ENCODE measurements at regions of chr16 and their contacts with region 1.

Region 1: DNA sequence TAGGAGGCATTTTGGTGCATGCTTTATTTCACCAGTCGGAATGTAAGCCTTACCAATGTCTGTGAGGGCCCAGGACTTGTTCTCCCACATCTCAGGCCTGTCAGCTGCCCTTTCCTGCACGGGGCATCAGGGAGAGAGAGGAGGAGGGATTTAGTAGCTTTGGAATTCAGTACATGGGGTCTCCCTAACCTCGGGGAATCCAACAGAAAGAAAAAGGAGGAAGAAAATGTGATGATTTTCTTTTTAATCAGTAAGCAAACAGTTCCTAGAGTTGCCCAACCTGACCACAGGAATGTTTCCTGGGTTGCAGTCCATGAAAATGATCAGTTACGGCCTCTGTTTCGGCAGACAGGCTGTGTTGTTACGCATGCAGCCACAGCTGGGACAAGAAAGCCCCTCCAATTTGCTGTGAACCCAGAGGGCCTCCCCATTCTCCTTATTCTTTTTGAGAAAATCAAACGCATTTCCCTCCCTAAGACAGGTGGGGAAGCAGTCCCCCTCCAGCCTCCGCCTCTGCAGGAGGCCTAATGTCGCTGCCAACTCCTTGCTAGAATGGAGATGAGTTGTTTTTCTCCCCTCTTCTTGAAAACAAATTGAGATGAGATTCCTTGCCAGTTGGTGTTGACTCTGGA is 53.1 kb upstream of the TANGO6 start:
- DNase-seq: peak; percentile 32 to 68 (median 59)
- ATAC-seq: peak; percentile 57
- H3K4me3 ChIP-seq: no peak overlapping the region
- H3K27ac ChIP-seq: peak overlapping the region; percentile 77 to 92 (median 80)
- H3K4me1 ChIP-seq: peaks cover 88% of the 10 kb centered on the region
- H3K27me3 ChIP-seq: no peaks in the 10 kb centered on the region
- CTCF ChIP-seq: no peak
- POLR2A ChIP-seq: peak in 2 of 3 donors; percentile 9 to 13

Region 2: DNA sequence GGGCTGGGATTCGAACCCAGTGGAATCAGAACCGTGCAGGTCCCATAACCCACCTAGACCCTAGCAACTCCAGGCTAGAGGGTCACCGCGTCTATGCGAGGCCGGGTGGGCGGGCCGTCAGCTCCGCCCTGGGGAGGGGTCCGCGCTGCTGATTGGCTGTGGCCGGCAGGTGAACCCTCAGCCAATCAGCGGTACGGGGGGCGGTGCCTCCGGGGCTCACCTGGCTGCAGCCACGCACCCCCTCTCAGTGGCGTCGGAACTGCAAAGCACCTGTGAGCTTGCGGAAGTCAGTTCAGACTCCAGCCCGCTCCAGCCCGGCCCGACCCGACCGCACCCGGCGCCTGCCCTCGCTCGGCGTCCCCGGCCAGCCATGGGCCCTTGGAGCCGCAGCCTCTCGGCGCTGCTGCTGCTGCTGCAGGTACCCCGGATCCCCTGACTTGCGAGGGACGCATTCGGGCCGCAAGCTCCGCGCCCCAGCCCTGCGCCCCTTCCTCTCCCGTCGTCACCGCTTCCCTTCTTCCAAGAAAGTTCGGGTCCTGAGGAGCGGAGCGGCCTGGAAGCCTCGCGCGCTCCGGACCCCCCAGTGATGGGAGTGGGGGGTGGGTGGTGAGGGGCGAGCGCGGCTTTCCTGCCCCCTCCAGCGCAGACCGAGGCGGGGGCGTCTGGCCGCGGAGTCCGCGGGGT is 53.1 kb before region 1 on chr16 and contains the start of gene CDH1:
- intact Hi-C with region 1: loop called (anchors 10 kb)
- DNase-seq: peak; percentile 97 to 98 (median 98)
- ATAC-seq: peak; percentile 89
- H3K4me3 ChIP-seq: peak within 1 kb of the TSS; percentile 74 to 94
- H3K27ac ChIP-seq: peak within 1 kb of the TSS; percentile 96 to 98 (median 96)
- H3K4me1 ChIP-seq: peaks cover 57% of the 10 kb centered on the region
- H3K27me3 ChIP-seq: no peaks in the 10 kb centered on the region
- CTCF ChIP-seq: peak in 1 of 7 experiments; percentile 4
- POLR2A ChIP-seq: peak; percentile 99
- total RNA-seq, gene CDH1: 95.3 to 107 TPM

Measured in body of pancreas (tissue), 4 donors.